ENCODE measurements at regions of chr17 and their contacts with region 1.

Region 1: DNA sequence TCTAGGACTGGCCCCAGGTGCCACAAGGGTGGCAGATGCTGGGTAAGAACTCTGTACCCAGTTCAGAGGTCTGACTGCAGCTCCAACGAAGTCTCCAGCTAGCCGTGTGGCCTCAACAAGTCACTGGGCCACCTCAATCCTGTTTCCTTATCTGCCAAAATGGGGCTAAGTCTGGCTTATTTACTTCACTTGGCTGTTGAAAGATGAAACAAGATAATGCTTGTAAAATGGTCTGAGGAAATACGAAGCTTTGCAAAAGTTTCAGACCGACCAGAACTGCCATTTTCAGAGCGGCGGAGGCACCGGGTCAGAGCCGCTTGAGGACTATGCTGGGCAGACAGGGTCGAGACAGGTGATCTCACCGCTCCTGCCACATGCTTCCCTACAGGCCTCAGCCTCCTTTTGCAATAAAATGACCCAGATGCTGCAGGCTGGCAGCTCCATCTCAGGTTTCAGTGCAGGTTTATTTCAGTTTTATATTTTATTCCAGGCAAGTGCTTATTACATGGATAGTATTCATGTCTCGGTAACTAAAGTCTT is 17.2 kb downstream of the MNT start:
- DNase-seq: no peak
- H3K4me3 ChIP-seq: no peak overlapping the region
- H3K27ac ChIP-seq: peak overlapping the region; percentile 38
- H3K4me1 ChIP-seq: peaks cover 24% of the 10 kb centered on the region
- H3K27me3 ChIP-seq: no peaks in the 10 kb centered on the region
- CTCF ChIP-seq: no peak

Region 2: GRCh38 chr17:2416010-2416734 is 32.5 kb after region 1 on chr17:
- intact Hi-C with region 1: loop called (anchors 2 kb)
- DNase-seq: peak; percentile 88
- H3K4me3 ChIP-seq: no peak overlapping the region
- H3K27ac ChIP-seq: peak overlapping the region; percentile 34
- H3K4me1 ChIP-seq: peaks cover 48% of the 10 kb centered on the region
- H3K27me3 ChIP-seq: no peaks in the 10 kb centered on the region
- CTCF ChIP-seq: peak; percentile 97

Region 3: DNA sequence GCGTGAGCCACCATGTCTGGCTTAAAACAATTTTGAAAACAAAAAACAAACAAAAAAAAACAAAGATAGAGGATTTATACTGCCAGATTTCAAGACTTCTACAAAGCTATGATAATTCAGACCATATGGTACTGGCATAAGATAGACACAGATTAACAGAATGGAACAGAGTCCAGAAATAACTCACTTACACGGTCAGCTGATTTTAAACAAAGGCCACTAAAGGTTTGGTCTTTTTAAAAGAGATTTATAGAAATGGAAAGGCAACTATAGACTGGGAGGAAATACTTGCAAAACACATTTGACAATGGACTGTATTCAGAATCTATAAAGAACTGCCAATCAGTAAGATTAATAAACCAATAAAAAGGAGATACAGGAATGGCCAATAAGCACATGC is 65.8 kb after region 1 on chr17:
- intact Hi-C with region 1: no loop called
- DNase-seq: no peak
- H3K4me3 ChIP-seq: no peak overlapping the region
- H3K27ac ChIP-seq: no peak overlapping the region
- H3K4me1 ChIP-seq: peaks cover 11% of the 10 kb centered on the region
- H3K27me3 ChIP-seq: no peaks in the 10 kb centered on the region
- CTCF ChIP-seq: no peak

Measured in left ventricle myocardium inferior (tissue), 1 donor.